ENCODE measurements at regions of chr17 and their contacts with region 1.

Region 1: DNA sequence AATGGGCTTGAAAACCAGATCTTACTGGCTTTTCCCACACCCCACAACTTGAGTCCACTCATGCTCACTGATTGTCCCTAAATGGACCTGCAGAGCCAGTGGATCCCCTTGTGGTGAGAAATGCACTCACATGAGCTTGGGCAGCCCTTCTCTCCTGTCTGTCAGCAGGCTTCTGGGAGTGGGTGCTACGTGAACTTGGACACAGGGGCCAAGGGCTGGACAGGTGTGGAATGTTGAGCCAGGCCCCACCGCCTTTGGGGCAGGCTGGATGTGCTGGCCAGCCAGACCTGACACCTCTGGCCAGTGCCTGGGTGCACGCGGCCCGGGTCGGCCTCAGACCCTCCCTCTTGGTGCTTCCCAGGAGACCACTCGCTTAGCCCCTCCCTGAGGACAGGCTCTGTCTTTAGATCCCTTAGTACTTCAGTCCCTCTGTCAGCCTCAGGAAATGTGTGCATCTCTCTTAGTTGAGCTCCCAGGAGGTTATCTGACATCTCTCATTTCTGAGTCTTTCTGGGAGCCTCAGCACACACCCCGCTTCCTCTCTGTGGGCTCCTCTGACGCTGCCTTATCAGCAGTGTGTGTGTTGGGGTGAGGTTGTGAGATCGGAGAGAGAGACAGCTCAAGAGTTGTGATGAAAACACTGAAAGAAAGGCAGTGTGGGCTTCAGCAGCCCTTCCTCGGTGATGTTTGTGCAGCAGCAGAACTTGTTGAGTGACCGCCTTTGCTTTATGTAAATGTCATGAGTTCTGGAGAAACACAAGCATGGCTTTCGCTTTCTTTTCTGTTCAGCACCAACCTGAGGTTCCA is 117.0 kb downstream of the RAB11FIP4 start:
- DNase-seq: peak; percentile 66
- ATAC-seq: peak; percentile 94
- H3K4me3 Mint-ChIP-seq: peak overlapping the region; percentile 89
- H3K27ac Mint-ChIP-seq: peak overlapping the region; percentile 99
- H3K4me1 Mint-ChIP-seq: peaks cover 45% of the 10 kb centered on the region
- H3K27me3 Mint-ChIP-seq: no peaks in the 10 kb centered on the region

Region 2: GRCh38 chr17:31321481-31321880 is 187.0 kb before region 1 on chr17 and contains the start of gene EVI2A:
- POLR2A ChIA-PET with region 1: interaction called, 12 read pairs
- DNase-seq: peak; percentile 50
- ATAC-seq: peak; percentile 94
- H3K4me3 Mint-ChIP-seq: peak within 1 kb of the TSS; percentile 89
- H3K27ac Mint-ChIP-seq: peak within 1 kb of the TSS; percentile 97
- H3K4me1 Mint-ChIP-seq: peaks cover 22% of the 10 kb centered on the region
- H3K27me3 Mint-ChIP-seq: no peaks in the 10 kb centered on the region
- total RNA-seq, gene EVI2A: 74.9 to 78.3 TPM

Region 3: GRCh38 chr17:31467502-31468256 is 40.8 kb before region 1 on chr17:
- POLR2A ChIA-PET with region 1: interaction called, 12 read pairs
- DNase-seq: no peak
- ATAC-seq: peak; percentile 28
- H3K4me3 Mint-ChIP-seq: peak overlapping the region; percentile 47
- H3K27ac Mint-ChIP-seq: peak overlapping the region; percentile 80
- H3K4me1 Mint-ChIP-seq: peaks cover 31% of the 10 kb centered on the region
- H3K27me3 Mint-ChIP-seq: peaks cover 4% of the 10 kb centered on the region

Region 4: DNA sequence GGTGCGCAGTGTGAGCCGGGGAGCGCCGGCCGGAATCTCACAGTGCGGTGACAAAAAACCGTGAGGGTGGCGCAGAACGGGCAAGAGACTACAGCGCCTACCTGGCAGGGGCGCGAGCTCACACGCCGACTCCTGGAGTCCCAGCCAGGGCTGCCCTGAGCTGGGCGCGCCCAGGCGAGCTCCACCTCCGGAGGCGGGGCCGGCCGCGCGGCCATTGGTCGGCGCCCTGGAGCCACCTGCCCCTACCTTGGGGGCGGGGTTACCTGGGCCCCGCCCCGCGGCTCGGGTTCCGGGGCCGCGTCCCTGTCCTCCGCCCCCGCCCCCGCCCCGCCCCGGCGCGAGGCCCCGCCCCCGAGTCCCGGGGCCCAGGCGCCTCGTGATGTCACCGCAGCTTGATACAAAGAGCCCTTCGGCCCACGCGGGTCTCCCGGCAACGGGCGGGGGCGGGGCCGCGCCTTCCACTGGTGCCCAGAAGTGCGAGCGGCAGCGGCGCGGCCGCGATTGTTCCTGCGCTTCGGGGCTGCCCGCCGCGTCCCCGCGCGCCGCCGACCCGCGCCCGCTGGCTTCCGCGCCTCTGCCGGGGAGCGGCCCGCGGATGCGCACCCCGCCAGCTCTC is 20.7 kb before region 1 on chr17:
- POLR2A ChIA-PET with region 1: interaction called, 208 read pairs
- DNase-seq: peak; percentile 90
- ATAC-seq: peak; percentile 91
- H3K4me3 Mint-ChIP-seq: peak overlapping the region; percentile 85
- H3K27ac Mint-ChIP-seq: peak overlapping the region; percentile 71
- H3K4me1 Mint-ChIP-seq: peaks cover 45% of the 10 kb centered on the region
- H3K27me3 Mint-ChIP-seq: no peaks in the 10 kb centered on the region

Region 5: DNA sequence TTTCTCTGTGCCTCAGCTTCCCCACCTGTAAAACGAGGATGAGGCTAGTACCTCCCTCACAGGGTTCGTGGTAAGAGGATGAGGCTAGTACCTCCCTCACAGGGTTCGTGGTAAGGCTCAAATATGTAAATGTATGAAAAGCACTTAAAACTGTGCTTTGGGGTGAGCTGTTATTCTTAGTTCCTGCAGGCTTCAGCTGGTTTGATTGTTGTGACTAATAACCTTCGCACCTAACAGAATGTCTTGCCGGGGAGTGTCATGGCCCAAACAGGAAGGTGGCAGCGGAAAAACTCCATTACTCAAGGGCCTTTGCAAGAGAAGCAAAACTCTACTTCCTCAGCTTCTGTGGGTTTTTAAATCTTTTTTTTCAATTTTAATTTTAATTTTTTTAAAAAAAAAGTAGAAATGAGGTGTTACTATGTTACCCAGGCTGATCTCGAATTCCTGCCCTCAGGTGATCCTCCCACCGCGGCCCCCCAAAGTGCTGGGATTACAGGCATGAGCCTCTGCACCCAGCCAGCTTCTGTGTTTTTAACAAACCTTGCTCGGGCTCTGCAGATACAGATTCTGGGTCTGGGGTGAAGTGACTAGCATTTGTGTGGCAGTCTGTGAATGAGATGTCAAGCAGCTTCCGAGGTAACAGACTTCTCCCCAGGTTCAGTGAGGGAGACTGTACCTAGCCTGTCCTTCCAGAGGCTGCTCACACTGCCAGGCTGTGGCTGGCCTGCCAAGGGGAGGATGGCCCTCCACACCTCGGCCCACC is 14.1 kb before region 1 on chr17:
- POLR2A ChIA-PET with region 1: interaction called, 208 read pairs
- DNase-seq: no peak
- ATAC-seq: peak; percentile 81
- H3K4me3 Mint-ChIP-seq: peak overlapping the region; percentile 73
- H3K27ac Mint-ChIP-seq: peak overlapping the region; percentile 97
- H3K4me1 Mint-ChIP-seq: peaks cover 70% of the 10 kb centered on the region
- H3K27me3 Mint-ChIP-seq: no peaks in the 10 kb centered on the region

Measured in activated naive CD8-positive, alpha-beta T cell treated with anti-CD3 and anti-CD28 coated beads, Interleukin-2, amount 10 ng/mL, durations not matched to agents 7 days and 5 days (primary cell).